Transverse colon (tissue), 4 donors: ENCODE measurements at regions of chr15 and their contacts with region 1.

Region 1: DNA sequence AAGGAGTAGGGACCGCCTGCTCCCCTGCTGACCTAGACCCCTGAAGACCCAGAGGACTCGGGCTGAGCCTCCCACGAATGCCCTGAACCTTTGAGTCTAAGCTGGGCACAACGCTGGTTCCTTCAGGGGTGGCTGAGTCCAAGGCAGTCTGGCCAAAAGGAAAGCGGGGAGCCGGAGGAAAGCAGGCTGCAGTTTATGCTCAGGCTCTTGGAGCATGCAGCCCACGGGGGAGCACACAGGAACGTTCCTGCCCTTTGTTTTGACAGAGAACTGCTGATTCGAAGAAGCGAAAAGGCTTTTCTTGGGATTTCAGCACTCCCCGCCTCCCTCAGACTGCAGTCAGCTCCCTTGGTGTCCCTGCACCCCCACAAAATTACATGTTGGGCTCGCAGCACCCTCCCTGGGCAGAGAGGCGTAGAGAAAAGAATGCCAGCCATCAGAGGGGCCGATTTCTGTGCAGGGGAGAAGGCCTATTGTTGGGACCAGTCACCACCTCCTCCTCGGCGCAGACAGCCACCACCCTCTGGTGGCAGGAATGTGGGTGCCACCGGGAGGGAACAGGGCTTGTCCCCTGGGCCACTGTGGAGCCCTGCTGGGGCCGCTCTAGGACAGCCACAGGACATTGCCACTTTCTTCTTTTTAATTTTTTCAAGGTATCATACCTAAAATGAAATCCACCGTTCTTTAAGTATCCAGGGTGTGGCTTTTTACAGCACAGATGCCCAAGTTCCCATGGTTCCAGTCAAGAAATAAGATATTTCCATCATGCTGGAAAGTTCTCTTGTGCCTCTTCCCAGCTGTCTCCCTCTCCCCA is 72.2 kb downstream of the SMAD6 start:
- DNase-seq: peak; percentile 91
- H3K4me3 ChIP-seq: no peak overlapping the region
- H3K27ac ChIP-seq: peak overlapping the region; percentile 77 to 82 (median 78)
- H3K4me1 ChIP-seq: peaks cover 34 to 69% (median 56%) of the 10 kb centered on the region in 4 donors
- H3K27me3 ChIP-seq: no peaks in the 10 kb centered on the region
- CTCF ChIP-seq: peak; percentile 95 to 99 (median 97)
- EP300 ChIP-seq: no peak
- POLR2A ChIP-seq: no peak

Region 2: GRCh38 chr15:66545249-66545648 is 229.0 kb before region 1 on chr15:
- in situ Hi-C with region 1: no loop called
- intact Hi-C with region 1: no loop called
- DNase-seq: no peak
- H3K4me3 ChIP-seq: no peak overlapping the region
- H3K27ac ChIP-seq: no peak overlapping the region
- H3K4me1 ChIP-seq: no peaks in the 10 kb centered on the region
- H3K27me3 ChIP-seq: no peaks in the 10 kb centered on the region
- CTCF ChIP-seq: no peak
- EP300 ChIP-seq: no peak
- POLR2A ChIP-seq: no peak

Region 3: GRCh38 chr15:66619151-66619903 is 154.9 kb before region 1 on chr15:
- in situ Hi-C with region 1: loop called in 2 of 4 experiments (anchors 10 to 25 kb)
- intact Hi-C with region 1: loop called (anchors 10 kb)
- DNase-seq: peak; percentile 84
- H3K4me3 ChIP-seq: no peak overlapping the region
- H3K27ac ChIP-seq: peak overlapping the region; percentile 8 to 82 (median 58)
- H3K4me1 ChIP-seq: peaks cover 10 to 52% (median 36%) of the 10 kb centered on the region in 4 donors
- H3K27me3 ChIP-seq: peaks cover 6% of the 10 kb centered on the region
- CTCF ChIP-seq: peak; percentile 86 to 94 (median 92)
- EP300 ChIP-seq: no peak
- POLR2A ChIP-seq: no peak

Region 4: GRCh38 chr15:66700802-66701421 is 73.3 kb before region 1 on chr15:
- in situ Hi-C with region 1: no loop called
- intact Hi-C with region 1: loop called (anchors 5 kb)
- DNase-seq: peak; percentile 97
- H3K4me3 ChIP-seq: peak overlapping the region; percentile 59 to 78 (median 73)
- H3K27ac ChIP-seq: peak overlapping the region; percentile 84 to 92 (median 91)
- H3K4me1 ChIP-seq: peaks cover 3 to 39% (median 31%) of the 10 kb centered on the region in 4 donors
- H3K27me3 ChIP-seq: no peaks in the 10 kb centered on the region
- CTCF ChIP-seq: no peak
- EP300 ChIP-seq: no peak
- POLR2A ChIP-seq: no peak

Region 5: GRCh38 chr15:66715181-66715624 is 59.0 kb before region 1 on chr15:
- in situ Hi-C with region 1: no loop called
- intact Hi-C with region 1: loop called (anchors 5 kb)
- DNase-seq: no peak
- H3K4me3 ChIP-seq: no peak overlapping the region
- H3K27ac ChIP-seq: peak overlapping the region; percentile 44 to 69 (median 58)
- H3K4me1 ChIP-seq: peaks cover 12 to 45% (median 22%) of the 10 kb centered on the region in 4 donors
- H3K27me3 ChIP-seq: no peaks in the 10 kb centered on the region
- CTCF ChIP-seq: no peak
- EP300 ChIP-seq: no peak
- POLR2A ChIP-seq: no peak